Ovary (tissue), 10 donors: ENCODE measurements at regions of chr5 and their contacts with region 1.

Region 1: GRCh38 chr5:116137544-116138378 is 52.9 kb downstream of the COMMD10 start:
- DNase-seq: no peak
- H3K4me3 ChIP-seq: no peak overlapping the region
- H3K27ac ChIP-seq: no peak overlapping the region
- H3K4me1 ChIP-seq: no peaks in the 10 kb centered on the region
- H3K27me3 ChIP-seq: no peaks in the 10 kb centered on the region
- CTCF ChIP-seq: peak; percentile 55 to 74 (median 62)
- EP300 ChIP-seq: no peak
- POLR2A ChIP-seq: no peak

Region 2: GRCh38 chr5:117143406-117143805 is 1005.6 kb after region 1 on chr5:
- intact Hi-C with region 1: loop called in 1 of 4 experiments (anchors 10 kb)
- DNase-seq: no peak
- H3K4me3 ChIP-seq: no peak overlapping the region
- H3K27ac ChIP-seq: no peak overlapping the region
- H3K4me1 ChIP-seq: no peaks in the 10 kb centered on the region
- H3K27me3 ChIP-seq: no peaks in the 10 kb centered on the region
- CTCF ChIP-seq: no peak
- EP300 ChIP-seq: no peak
- POLR2A ChIP-seq: no peak